ENCODE measurements at regions of chr10 and their contacts with region 1.

Region 1: DNA sequence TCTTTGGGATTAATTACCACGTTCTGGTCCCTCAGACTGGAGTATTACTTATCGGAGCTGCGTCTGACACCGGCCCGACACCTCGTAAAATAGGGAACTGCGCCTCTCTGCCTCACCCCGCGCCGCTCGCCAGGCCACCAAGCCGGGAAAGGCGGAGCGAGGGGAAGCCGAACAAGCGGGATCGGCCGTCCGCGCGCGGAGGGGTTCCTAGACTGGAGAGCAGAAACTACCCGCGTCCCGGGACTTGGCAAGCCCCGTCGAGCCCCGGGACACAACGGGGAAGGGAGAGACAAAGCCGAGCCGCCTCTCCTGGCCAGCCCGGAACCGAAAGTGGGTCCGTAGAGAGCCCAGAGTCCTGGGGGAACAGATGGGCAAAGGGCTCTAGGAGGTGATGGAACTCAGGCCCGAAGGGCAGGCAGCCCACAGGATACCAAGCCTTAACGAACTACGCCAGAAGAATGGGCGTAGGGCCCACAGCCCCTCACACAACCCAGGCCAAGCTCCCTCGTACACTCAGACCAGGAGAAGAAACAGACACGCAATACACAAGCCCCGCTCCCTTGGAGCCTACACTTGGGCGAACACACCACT is 6.5 kb downstream of the LBX1 start:
- DNase-seq: no peak
- H3K4me3 Mint-ChIP-seq: no peak overlapping the region
- H3K27ac Mint-ChIP-seq: no peak overlapping the region
- H3K4me1 Mint-ChIP-seq: peaks cover 32% of the 10 kb centered on the region
- H3K27me3 Mint-ChIP-seq: peaks cover 99% of the 10 kb centered on the region

Region 2: GRCh38 chr10:101189541-101190401 is 33.0 kb before region 1 on chr10:
- CTCF ChIA-PET with region 1: no interaction called
- DNase-seq: peak; percentile 27
- H3K4me3 Mint-ChIP-seq: no peak overlapping the region
- H3K27ac Mint-ChIP-seq: no peak overlapping the region
- H3K4me1 Mint-ChIP-seq: peaks cover 13% of the 10 kb centered on the region
- H3K27me3 Mint-ChIP-seq: peaks cover 28% of the 10 kb centered on the region

Region 3: DNA sequence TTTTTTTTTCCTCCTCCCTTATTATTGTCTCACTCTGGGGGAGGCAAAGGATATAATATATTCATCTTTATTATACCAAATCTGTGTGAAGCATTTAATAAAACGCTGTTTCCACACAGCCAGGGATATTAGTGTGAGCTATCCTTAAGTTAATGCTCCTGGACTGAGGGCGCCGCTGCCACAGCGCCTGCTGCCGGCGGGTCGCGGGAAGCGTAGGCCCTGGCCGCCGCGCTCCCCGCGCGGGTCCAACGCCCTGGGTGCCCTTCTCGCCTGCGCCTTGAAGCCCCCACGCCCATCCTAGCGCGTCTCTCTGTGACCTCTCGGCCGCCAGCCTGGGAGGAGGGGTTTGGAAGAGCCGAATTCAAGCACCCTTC is 15.9 kb after region 1 on chr10:
- CTCF ChIA-PET with region 1: interaction called, 10 read pairs
- DNase-seq: peak; percentile 40
- H3K4me3 Mint-ChIP-seq: no peak overlapping the region
- H3K27ac Mint-ChIP-seq: no peak overlapping the region
- H3K4me1 Mint-ChIP-seq: peaks cover 7% of the 10 kb centered on the region
- H3K27me3 Mint-ChIP-seq: peaks cover 99% of the 10 kb centered on the region